ENCODE measurements at regions of chr9 and their contacts with region 1.

Region 1: GRCh38 chr9:77764894-77765780 is 117.0 kb upstream of the GNA14 start:
- DNase-seq: no peak
- H3K4me3 ChIP-seq: no peak overlapping the region
- H3K27me3 ChIP-seq: no peaks in the 10 kb centered on the region
- CTCF ChIP-seq: peak; percentile 72

Region 2: DNA sequence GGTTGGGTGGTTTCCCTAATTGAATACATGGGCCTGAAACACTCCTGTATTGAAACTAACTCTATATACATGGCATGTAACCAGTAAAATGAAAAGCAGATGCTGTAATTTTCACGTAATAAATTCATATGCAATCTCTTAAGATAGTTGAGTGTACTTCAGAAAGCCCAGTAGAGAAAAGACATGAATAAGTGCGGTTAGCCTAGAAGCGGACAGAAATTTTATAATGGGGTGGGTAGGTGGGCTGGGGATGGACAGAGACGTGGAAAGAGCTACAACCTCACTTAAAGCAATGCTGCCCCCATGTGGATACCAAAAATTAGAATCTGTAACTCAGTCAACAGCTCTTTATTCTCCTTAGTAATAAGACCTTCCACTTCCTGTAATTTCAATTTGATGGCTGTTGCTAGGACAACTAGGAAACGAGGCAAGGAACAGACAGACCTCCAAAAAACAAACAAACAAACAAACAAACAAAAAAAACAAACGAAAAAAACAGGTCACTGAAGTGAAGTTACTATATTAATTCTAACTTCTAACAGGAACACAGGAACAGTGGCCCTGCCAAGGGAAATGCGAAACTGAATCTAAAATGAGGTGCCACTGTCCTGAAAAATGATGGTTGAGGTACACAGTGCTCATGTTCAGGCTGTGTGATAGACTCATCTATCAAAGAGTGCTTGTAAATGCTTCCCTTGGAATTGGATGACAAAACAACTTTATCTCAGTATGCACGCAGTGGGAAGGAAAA is 13.6 kb before region 1 on chr9:
- CTCF ChIA-PET with region 1: interaction called, 14 read pairs
- POLR2A ChIA-PET with region 1: no interaction called
- DNase-seq: peak; percentile 80
- H3K4me3 ChIP-seq: no peak overlapping the region
- H3K27me3 ChIP-seq: no peaks in the 10 kb centered on the region
- CTCF ChIP-seq: peak; percentile 49